GM12878 (cell line): ENCODE measurements at regions of chr17 and their contacts with region 1.

Region 1: DNA sequence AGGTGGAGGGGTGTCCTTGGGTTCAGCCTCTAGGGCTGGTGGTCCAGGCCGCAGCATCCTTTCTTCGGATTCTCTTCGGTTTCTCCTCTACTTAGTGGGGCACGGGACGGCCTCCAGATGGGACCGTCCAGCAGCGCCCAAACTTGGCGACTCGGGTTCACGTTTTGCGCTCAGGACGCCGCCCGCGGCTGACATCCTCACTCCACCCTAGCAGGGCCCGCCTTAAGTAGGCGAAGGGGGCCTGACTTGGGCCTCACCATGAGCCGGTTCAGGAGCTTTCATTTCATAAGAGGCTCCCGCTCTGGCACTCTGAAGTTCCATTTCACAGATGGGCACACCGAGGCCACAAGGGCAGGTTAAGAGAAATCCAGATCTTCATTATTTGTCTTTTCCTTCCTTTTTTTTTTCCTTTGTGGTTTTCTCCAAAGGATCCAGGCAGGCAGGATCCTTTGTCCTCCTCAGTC is 141.2 kb downstream of the SEC14L1 start:
- DNase-seq: no peak
- ATAC-seq: peak; percentile 62
- H3K4me3 ChIP-seq: peak overlapping the region; percentile 75
- H3K27ac ChIP-seq: peak overlapping the region; percentile 46
- H3K4me1 ChIP-seq: peaks cover 26% of the 10 kb centered on the region
- H3K27me3 ChIP-seq: no peaks in the 10 kb centered on the region
- CTCF ChIP-seq: no peak
- EP300 ChIP-seq: no peak
- POLR2A ChIP-seq: no peak
- RAD21 ChIP-seq: no peak

Region 2: DNA sequence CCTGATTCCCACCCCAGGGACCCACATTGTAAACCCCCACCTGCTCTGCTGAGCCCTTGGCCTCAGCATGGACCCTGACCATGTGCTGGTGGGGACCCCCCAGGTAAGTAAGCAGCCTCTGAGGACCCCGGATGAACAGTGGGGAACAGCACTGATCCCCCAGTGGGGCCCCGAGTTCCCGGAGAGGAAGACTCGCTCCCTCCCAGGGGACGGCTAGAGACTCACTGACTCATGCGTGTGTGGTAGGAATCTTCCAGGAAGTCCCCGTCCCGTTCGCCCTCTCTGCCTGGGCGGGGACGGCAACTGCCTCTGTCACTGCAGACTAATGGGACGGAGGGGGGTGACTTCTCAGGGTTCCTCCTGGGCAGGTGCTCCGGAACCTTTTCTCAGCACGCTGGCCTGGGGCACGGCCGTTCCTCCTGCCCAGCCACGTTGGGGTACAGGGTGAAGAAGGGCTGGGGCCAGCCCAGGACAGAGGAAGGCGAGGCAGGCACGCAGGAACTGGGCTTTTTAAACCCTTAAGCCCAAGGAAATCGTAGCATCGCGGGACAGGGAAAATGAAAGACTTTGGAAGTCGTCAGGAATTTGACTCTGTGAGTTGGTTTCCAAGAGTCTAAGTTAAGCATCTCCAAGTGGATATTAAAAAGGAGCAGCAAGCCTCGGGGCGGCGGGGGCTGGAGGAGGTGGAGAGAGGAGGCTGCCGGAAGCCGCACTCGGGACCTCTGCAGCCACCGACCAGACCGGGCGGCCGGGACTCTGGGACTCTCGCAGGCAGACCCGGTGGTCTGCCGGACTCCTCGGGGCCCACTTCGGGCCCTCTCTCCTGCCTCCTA is 37.5 kb after region 1 on chr17:
- CTCF ChIA-PET with region 1: interaction called, 6 read pairs
- POLR2A ChIA-PET with region 1: interaction called, 7 read pairs
- RAD21 ChIA-PET with region 1: interaction called, 6 read pairs
- SMC1A ChIA-PET with region 1: no interaction called
- in situ Hi-C with region 1: no loop called
- intact Hi-C with region 1: loop called (anchors 1 kb)
- DNase-seq: no peak
- ATAC-seq: peak; percentile 43
- H3K4me3 ChIP-seq: peak overlapping the region; percentile 84
- H3K27ac ChIP-seq: peak overlapping the region; percentile 88
- H3K4me1 ChIP-seq: peaks cover 50% of the 10 kb centered on the region
- H3K27me3 ChIP-seq: no peaks in the 10 kb centered on the region
- CTCF ChIP-seq: no peak
- EP300 ChIP-seq: peak in 1 of 2 experiments; percentile 46; a peak in 1 of 4 replicates
- POLR2A ChIP-seq: peak; percentile 82
- RAD21 ChIP-seq: no peak